Right ventricle myocardium inferior (tissue), 1 donor: ENCODE measurements at regions of chr9 and their contacts with region 1.

Region 1: DNA sequence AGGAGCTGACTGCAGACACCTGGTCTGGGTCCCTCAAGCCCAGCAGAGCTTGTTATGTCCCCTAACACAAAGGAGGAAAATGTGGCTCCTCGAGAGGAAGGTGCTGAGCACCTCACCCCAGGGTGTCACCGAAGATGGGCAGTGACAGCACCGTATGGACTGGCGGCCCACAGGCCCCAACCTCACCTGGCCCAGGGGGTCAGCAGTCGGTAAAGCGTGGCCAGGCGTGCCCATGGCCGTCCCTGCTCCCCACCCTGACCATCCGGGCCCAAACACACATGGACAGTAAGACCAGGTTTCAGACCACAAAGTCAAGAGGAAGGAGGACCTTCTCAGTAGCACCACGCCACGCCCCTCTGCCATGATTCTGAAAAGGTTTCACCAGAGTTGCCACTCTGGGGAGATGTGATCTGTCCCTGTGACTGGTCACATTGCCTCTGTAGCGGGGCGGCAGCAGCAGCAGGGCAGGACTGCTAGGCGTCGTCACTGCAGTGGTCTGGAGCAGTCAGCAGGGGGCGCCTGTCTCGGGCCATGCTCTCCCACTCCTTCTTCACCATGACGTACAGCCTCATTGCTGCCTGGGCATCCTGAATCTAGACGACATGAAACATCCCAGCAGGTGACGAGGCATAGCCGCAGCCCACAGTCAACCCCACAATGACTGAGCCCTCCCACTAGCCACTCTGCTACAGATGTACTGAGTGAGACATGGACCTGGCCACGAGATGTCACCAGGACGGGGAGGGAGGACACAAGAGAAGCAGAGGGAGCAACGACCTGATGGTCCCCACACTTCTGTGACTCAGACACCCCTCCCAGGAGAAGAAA is 11.1 kb downstream of the REXO4 start:
- DNase-seq: peak; percentile 86
- ATAC-seq: peak; percentile 77

Region 2: GRCh38 chr9:133485361-133486260 is 78.9 kb after region 1 on chr9:
- intact Hi-C with region 1: loop called (anchors 1 kb)
- DNase-seq: peak; percentile 53
- ATAC-seq: no peak